BJ (cell line): ENCODE measurements at regions of chr4 and their contacts with region 1.

Region 1: DNA sequence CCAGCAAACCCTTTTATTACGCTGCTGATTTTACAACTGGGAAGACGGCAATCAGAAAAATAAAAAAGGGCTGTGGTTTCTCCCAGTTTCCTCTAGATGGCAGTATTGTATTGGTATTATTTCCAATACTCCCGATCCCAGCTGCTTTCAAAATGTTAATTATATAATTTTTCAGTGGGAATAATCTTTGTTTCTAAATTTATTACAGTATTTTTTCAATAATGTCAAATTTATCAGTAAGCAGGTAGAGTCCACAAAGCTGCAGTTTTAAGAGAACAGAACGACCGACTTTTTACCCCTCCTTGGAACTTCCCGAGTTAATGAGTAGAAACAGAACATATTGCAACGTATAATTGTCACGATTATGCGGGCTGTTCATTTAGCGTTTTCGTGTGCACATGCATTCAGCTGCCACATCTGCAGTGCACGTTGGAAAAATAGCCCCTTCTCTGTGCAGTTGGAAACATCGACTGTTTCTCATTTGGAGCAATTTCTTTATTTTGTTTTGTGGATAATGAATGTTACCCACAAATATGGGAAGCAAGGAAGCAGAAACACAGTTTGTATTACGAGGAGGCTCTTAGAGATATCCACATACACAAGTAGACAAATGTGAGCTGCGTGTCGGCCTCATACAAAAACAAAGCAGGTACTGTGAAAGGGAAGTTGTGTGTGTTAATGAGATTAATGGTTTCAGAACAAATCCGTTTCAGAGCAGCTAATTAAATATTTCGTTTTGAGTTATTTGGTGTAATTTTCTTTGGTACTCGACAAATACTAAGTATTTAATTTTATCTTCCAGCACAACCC is 188.0 kb downstream of the STIM2 start:
- DNase-seq: no peak
- H3K4me3 ChIP-seq: peak overlapping the region; percentile 13; the same call in 1 of the 2 replicates
- H3K27me3 ChIP-seq: peaks cover 12% of the 10 kb centered on the region
- CTCF ChIP-seq: peak; percentile 62

Region 2: GRCh38 chr4:27027428-27027827 is 21.2 kb before region 1 on chr4:
- CTCF ChIA-PET with region 1: interaction called, 12 read pairs
- POLR2A ChIA-PET with region 1: no interaction called
- DNase-seq: no peak
- H3K4me3 ChIP-seq: no peak overlapping the region
- H3K27me3 ChIP-seq: no peaks in the 10 kb centered on the region
- CTCF ChIP-seq: no peak

Region 3: GRCh38 chr4:27720010-27720766 is 671.6 kb after region 1 on chr4:
- CTCF ChIA-PET with region 1: no interaction called
- POLR2A ChIA-PET with region 1: no interaction called
- DNase-seq: no peak
- H3K4me3 ChIP-seq: no peak overlapping the region
- H3K27me3 ChIP-seq: no peaks in the 10 kb centered on the region
- CTCF ChIP-seq: no peak